ENCODE measurements at regions of chr2 and their contacts with region 1.

Region 1: GRCh38 chr2:170815746-170816503 is 762 bp upstream of the GAD1 start:
- DNase-seq: peak; percentile 31
- H3K4me3 ChIP-seq: no peak overlapping the region
- H3K27ac ChIP-seq: no peak overlapping the region
- H3K4me1 ChIP-seq: peaks cover 16% of the 10 kb centered on the region
- H3K27me3 ChIP-seq: peaks cover 62 to 72% of the 10 kb centered on the region in 2 experiments
- CTCF ChIP-seq: peak; percentile 72 to 82
- POLR2A ChIP-seq: no peak

Region 2: GRCh38 chr2:169933124-169933711 is 882.7 kb before region 1 on chr2:
- CTCF ChIA-PET with region 1: no interaction called
- POLR2A ChIA-PET with region 1: no interaction called
- dilution Hi-C with region 1: no loop called
- intact Hi-C with region 1: loop called (anchors 5 kb)
- DNase-seq: peak; percentile 54
- H3K4me3 ChIP-seq: no peak overlapping the region
- H3K27ac ChIP-seq: no peak overlapping the region
- H3K4me1 ChIP-seq: no peaks in the 10 kb centered on the region
- H3K27me3 ChIP-seq: no peaks in the 10 kb centered on the region
- CTCF ChIP-seq: peak; percentile 45 to 57
- POLR2A ChIP-seq: no peak

Region 3: GRCh38 chr2:170361090-170361936 is 454.6 kb before region 1 on chr2:
- CTCF ChIA-PET with region 1: interaction called, 118 read pairs
- POLR2A ChIA-PET with region 1: no interaction called
- dilution Hi-C with region 1: no loop called
- intact Hi-C with region 1: loop called (anchors 1 kb)
- DNase-seq: peak; percentile 75
- H3K4me3 ChIP-seq: no peak overlapping the region
- H3K27ac ChIP-seq: no peak overlapping the region
- H3K4me1 ChIP-seq: no peaks in the 10 kb centered on the region
- H3K27me3 ChIP-seq: peaks cover 41 to 63% of the 10 kb centered on the region in 2 experiments
- CTCF ChIP-seq: peak; percentile 71 to 72
- POLR2A ChIP-seq: no peak

Region 4: DNA sequence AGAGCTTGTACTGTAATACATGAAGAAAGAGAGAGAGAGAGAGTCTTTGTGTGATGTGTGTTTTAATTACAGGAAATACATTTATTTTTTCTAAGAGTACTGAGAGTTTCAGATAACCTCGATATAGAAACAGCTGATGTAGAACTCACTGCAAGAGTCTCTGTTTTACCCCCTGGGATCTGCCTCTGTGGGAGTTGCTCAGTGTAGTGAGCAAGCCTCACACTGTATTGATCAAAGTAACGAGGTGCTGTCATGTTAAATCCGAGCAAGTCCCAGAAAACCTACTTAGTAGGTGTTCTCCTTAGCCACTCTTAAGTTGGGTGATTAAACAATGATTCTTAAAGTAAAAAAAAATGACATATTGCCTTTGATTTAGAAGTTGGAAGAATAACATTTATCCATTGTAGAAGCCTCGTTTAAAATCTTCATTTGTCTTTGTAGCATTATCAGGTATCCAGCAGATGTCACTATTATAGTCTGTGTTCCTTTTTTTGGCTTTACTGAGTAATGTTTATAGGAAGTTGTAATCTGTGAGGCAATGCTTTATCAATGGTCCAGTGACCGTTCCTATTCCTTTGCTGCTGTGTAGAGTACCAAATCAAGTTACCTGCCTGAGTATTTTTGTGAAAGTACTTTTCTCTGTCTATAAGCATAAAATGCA is 419.0 kb before region 1 on chr2:
- CTCF ChIA-PET with region 1: interaction called, 6 read pairs
- POLR2A ChIA-PET with region 1: no interaction called
- dilution Hi-C with region 1: no loop called
- intact Hi-C with region 1: loop called (anchors 1 kb)
- DNase-seq: peak; percentile 25
- H3K4me3 ChIP-seq: no peak overlapping the region
- H3K27ac ChIP-seq: no peak overlapping the region
- H3K4me1 ChIP-seq: no peaks in the 10 kb centered on the region
- H3K27me3 ChIP-seq: peaks cover 4 to 11% of the 10 kb centered on the region in 2 experiments
- CTCF ChIP-seq: no peak
- POLR2A ChIP-seq: no peak

Region 5: GRCh38 chr2:170486730-170487129 is 329.2 kb before region 1 on chr2:
- CTCF ChIA-PET with region 1: interaction called, 18 read pairs
- POLR2A ChIA-PET with region 1: no interaction called
- dilution Hi-C with region 1: no loop called
- intact Hi-C with region 1: loop called (anchors 2 kb)
- DNase-seq: no peak
- H3K4me3 ChIP-seq: no peak overlapping the region
- H3K27ac ChIP-seq: no peak overlapping the region
- H3K4me1 ChIP-seq: no peaks in the 10 kb centered on the region
- H3K27me3 ChIP-seq: no peaks in the 10 kb centered on the region
- CTCF ChIP-seq: no peak
- POLR2A ChIP-seq: no peak

Region 6: DNA sequence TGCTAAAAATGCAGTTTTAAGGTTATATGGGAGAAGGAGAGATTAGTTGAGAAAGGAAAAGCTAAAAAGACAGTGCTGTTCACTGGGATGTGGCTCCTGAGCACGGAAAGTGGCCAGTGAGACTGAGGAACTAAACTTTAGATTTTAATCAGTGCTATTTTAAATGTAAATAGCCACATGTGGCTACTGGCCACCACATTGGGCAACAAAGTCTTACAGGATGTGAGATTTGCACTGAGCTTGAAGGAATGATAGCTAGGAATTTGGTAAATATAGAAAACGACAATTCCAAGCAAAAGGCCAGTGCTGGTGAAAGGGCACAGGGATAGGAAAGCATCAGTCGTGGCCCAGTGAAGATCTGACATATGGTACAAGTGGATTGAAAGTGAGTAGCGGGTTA is 114.9 kb before region 1 on chr2:
- CTCF ChIA-PET with region 1: no interaction called
- POLR2A ChIA-PET with region 1: no interaction called
- dilution Hi-C with region 1: no loop called
- intact Hi-C with region 1: no loop called
- DNase-seq: no peak
- H3K4me3 ChIP-seq: no peak overlapping the region
- H3K27ac ChIP-seq: no peak overlapping the region
- H3K4me1 ChIP-seq: no peaks in the 10 kb centered on the region
- H3K27me3 ChIP-seq: no peaks in the 10 kb centered on the region
- CTCF ChIP-seq: no peak
- POLR2A ChIP-seq: no peak